AG04449 (cell line): ENCODE measurements at regions of chr7 and their contacts with region 1.

Region 1: DNA sequence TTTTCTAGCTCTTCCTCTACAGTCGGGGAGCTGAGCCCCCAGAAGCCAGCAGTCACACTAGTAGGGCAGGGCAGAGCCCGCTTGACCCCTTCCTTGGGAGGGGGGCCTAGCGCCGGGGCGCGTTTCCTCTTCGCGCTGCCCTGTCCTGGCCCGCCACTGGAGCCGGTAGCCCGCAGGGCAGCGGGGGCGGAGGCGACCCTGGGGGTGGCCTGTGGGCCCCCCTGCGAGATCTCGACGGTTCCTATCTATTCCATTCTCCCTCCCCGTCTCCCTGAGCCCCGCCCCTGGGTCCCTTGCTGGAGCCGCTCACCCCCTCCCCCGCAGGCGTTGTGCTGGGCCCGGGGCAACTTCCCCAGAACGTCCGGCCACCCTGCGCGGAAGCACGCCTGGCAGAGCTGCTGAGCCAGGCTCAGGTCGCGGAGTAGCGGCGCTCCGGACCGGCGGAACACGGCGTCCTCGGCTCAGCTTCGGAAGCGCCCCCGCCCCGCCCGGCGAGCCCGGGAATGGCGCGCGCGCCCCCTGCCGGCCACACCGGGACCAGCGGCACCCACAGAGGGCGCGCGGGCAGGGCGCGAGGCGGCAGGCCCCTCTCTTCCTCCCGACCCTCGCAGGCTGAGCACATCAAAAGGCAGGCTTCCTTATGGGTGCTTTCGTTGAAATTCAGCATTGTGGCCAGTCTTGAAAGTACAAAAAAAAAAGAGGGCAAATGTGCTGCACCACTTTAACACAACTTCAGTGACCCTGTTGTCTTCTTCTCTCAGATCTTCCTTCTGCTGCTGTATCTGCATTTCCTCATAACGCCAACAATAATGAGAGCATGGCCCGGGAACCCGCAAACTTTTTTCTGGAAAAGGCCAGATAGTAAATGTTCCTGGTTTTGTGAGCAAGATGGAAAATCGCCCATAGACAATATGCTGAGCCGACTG is 327.6 kb downstream of the TNS3 start:
- DNase-seq: no peak
- H3K4me3 ChIP-seq: peak overlapping the region; percentile 66
- CTCF ChIP-seq: peak; percentile 75

Region 2: DNA sequence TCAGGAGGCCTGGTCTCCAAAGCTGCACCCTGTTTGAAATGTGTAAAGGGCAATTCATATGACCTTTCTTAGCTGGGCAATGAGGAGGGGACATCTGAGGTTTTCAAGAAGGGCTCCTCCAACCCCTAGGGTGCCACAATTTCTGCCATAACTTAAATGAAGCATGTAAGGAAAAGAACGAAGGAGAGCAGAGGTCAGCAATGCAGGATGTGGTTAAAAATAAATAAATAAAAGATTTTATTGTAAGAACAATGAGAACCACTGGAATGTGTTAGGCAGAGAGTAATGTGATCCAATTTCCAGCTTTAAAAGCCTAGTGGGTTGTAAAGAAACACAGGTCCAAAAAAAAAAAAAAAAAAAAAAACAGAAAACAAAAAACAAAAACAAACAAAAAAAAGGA is 345.6 kb before region 1 on chr7:
- CTCF ChIA-PET with region 1: no interaction called
- POLR2A ChIA-PET with region 1: no interaction called
- DNase-seq: peak; percentile 55
- H3K4me3 ChIP-seq: no peak overlapping the region
- CTCF ChIP-seq: no peak

Region 3: DNA sequence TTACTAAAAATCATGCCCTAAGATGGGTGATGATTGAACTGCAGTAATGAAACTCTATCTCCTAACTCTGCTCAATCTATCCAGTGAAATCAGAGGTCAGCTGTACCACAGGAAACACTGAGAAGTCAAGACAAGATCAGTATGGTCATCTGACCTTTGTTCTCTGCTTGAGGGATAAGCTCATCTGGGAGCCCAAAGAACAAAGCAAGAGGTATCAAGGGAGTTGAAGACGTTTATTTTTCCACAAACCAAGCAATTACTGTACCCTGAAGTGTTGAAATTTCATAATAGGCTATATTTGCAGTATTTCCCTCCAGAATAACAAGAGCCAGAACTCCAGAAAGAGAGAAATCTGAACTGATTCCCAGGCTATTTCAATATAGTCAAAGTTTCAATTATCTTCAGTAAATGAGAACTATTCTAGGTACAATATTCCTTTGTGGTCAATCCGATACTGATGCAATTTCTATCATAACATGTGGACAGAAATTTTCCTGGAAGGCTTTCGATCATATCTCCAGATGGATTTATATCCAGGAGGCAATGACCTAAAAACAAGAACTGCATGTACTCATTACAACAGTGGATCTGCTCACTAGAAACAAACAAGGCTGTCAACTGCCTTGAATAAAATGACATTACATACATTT is 17.7 kb before region 1 on chr7:
- CTCF ChIA-PET with region 1: interaction called, 11 read pairs
- POLR2A ChIA-PET with region 1: no interaction called
- DNase-seq: no peak
- H3K4me3 ChIP-seq: no peak overlapping the region
- CTCF ChIP-seq: no peak